ENCODE measurements at regions of chr16 and their contacts with region 1.

Region 1: DNA sequence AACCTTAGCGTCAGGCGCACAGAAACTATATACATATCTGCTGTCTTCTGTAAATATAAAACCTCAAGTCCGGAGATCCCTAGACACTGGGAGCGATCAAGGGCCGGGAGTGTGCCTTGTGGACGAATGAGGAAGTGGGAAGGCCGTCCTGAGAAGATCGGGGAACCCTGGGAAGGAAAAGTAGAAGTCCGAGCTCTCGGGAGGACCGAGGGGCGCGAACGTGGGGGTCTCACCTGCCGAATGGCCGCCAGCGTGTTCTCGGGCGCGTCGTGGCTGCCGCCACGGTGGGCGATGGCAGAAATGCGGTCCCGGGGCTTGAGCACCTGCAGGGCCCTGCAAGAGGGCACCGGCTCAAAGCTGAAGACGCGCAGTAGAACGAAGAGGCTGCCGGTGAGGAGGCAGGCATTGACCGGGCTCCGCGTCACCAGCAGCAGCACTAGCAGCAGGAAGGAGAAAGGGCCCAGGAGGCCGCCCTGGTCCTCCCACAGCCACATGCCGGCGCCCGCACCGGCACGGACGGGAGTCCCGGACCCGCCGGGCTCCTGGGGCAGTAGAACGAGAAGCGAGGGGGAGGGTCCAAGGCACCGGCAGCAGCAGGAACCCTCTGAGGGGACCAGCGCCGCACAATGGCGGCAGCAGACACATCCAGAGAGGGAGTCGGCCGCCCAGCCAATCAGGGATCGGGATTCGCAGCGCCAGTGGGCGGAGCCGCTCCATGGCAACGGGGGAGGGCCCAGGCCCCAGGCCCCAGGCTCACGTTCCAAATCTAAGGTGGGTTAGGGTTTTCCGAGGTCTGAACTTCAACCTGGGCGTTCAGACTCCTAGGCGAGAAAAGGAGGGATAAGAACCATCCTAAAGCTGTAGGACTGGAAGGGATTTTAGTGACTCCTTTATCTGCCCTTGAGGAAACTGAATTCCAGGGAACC is at the start of gene GDE1:
- ATAC-seq: peak; percentile 66 to 88 (median 84)
- H3K4me3 ChIP-seq: peak within 1 kb of the TSS; percentile 59 to 82 (median 76)
- H3K27ac ChIP-seq: peak within 1 kb of the TSS; percentile 79 to 82
- H3K4me1 ChIP-seq: peaks cover 10 to 38% of the 10 kb centered on the region in 2 donors
- total RNA-seq, gene GDE1: 30.2 to 130 (median 48.5) TPM

Region 2: GRCh38 chr16:19167710-19168370 is 353.9 kb before region 1 on chr16 and contains the start of gene SYT17:
- in situ Hi-C with region 1: loop called in 1 of 9 experiments (anchors 25 kb)
- ATAC-seq: peak; percentile 81 to 98 (median 85)
- H3K4me3 ChIP-seq: peak within 1 kb of the TSS; percentile 58 to 79 (median 63)
- H3K27ac ChIP-seq: peak within 1 kb of the TSS in 1 of 2 donors; percentile 57
- H3K4me1 ChIP-seq: peaks cover 0 to 5% of the 10 kb centered on the region in 2 donors
- total RNA-seq, gene SYT17: 0.85 to 37.4 (median 3.6) TPM

Region 3: GRCh38 chr16:19304750-19305149 is 217.0 kb before region 1 on chr16:
- in situ Hi-C with region 1: no loop called
- ATAC-seq: peak in 6 of 8 experiments; percentile 30 to 99 (median 93)
- H3K4me3 ChIP-seq: no peak overlapping the region
- H3K27ac ChIP-seq: no peak overlapping the region
- H3K4me1 ChIP-seq: no peaks in the 10 kb centered on the region

Region 4: DNA sequence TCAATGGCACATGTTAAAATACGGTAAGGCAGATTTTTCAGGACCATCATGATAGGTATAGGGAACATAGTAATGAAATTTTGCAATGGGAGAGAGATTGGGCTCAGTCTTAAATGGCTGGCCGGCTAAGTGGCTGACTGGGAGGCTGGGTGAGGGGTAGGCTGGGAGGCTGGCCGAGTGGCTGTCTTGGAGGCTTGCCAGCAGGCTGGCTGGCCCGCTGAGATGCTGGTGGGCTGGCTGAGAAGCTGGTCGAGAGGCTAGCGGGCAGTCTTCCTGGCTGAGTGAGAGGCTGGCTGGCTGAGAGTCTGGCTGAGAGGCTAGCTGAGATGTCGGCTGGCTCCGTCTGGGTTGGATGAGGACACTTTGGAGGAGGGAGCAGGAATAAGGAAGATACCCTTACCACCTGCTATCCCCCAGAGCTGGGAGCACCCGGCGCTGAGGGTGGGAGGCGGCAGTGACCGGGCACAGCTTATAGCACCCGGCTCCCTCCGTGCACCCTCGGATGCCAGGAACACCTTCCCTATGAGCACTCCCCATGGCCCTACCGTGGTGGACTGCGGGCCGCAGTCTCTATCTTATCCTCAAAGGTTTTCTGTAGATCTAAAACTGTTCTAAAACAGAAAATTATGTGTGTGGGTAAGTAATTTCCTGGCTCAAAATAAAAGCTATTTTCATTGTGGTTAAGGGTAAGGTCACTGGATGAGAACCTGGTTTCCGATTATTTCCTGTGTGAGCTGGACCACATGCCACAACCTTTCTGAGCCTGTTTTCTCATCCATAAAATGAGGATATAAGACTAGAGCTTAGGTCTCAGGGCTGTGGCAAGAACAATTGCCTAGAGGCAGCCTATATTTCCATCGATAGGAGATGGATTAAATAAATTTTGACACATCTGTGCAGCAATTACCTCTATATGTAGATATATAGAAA is 138.6 kb before region 1 on chr16:
- in situ Hi-C with region 1: no loop called
- ATAC-seq: peak in 3 of 8 experiments; percentile 32 to 58 (median 48)
- H3K4me3 ChIP-seq: no peak overlapping the region
- H3K27ac ChIP-seq: no peak overlapping the region
- H3K4me1 ChIP-seq: no peaks in the 10 kb centered on the region

Measured in motor neuron (in vitro differentiated cells).